ENCODE measurements at regions of chr21 and their contacts with region 1.

Region 1: GRCh38 chr21:17387030-17387617 is 125.7 kb upstream of the CXADR start:
- DNase-seq: peak; percentile 35
- H3K4me3 Mint-ChIP-seq: no peak overlapping the region
- H3K27ac Mint-ChIP-seq: no peak overlapping the region
- H3K4me1 Mint-ChIP-seq: no peaks in the 10 kb centered on the region
- H3K27me3 Mint-ChIP-seq: no peaks in the 10 kb centered on the region

Region 2: GRCh38 chr21:17352937-17353655 is 34.0 kb before region 1 on chr21:
- CTCF ChIA-PET with region 1: no interaction called
- POLR2A ChIA-PET with region 1: no interaction called
- DNase-seq: no peak
- H3K4me3 Mint-ChIP-seq: no peak overlapping the region
- H3K27ac Mint-ChIP-seq: no peak overlapping the region
- H3K4me1 Mint-ChIP-seq: no peaks in the 10 kb centered on the region
- H3K27me3 Mint-ChIP-seq: no peaks in the 10 kb centered on the region

Region 3: DNA sequence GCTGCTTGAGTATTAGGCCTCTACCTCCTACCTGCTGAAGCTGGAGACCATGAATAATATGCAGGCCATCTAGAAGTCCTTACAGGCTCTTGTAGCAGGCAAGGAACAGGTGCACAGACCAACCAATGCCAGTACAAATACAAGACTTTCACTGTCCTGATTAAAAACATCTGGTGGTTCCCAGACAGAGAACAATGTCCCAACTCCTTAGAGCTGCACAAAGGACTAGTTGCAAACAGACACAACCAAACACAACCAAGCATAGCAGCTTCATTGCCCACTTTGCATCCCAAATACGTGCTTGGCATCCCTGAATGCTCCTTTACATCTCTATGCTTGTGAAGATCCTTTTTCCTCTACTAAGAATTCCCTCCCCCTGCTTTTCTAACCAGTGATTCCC is 27.6 kb after region 1 on chr21:
- CTCF ChIA-PET with region 1: no interaction called
- POLR2A ChIA-PET with region 1: no interaction called
- DNase-seq: no peak
- H3K4me3 Mint-ChIP-seq: no peak overlapping the region
- H3K27ac Mint-ChIP-seq: no peak overlapping the region
- H3K4me1 Mint-ChIP-seq: peaks cover 3% of the 10 kb centered on the region
- H3K27me3 Mint-ChIP-seq: no peaks in the 10 kb centered on the region

Region 4: DNA sequence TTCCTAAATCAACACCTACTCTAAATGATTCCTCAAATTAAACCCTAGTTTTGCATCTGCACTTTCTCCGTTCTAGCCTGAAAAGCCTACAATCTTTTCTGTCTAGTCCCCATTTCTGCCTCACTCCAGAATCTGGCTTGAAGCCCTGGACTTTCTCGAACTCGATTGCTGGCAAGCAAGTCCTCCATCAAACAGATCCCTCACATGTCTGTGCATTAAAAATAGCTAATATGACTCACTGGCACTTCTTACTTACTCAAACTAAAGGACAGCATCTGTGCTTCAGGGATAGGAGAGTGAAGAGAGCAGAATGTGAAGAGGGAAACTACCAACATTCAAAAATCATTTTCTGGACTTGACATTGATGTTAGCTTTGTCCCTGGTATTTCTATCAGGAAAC is 73.9 kb after region 1 on chr21:
- CTCF ChIA-PET with region 1: no interaction called
- POLR2A ChIA-PET with region 1: no interaction called
- DNase-seq: no peak
- H3K4me3 Mint-ChIP-seq: no peak overlapping the region
- H3K27ac Mint-ChIP-seq: no peak overlapping the region
- H3K4me1 Mint-ChIP-seq: no peaks in the 10 kb centered on the region
- H3K27me3 Mint-ChIP-seq: peaks cover 7% of the 10 kb centered on the region

Region 5: GRCh38 chr21:17585875-17586450 is 198.8 kb after region 1 on chr21:
- CTCF ChIA-PET with region 1: interaction called, 62 read pairs
- POLR2A ChIA-PET with region 1: interaction called, 3 read pairs
- DNase-seq: no peak
- H3K4me3 Mint-ChIP-seq: no peak overlapping the region
- H3K27ac Mint-ChIP-seq: no peak overlapping the region
- H3K4me1 Mint-ChIP-seq: no peaks in the 10 kb centered on the region
- H3K27me3 Mint-ChIP-seq: no peaks in the 10 kb centered on the region